ENCODE measurements at regions of chr14 and their contacts with region 1.

Region 1: DNA sequence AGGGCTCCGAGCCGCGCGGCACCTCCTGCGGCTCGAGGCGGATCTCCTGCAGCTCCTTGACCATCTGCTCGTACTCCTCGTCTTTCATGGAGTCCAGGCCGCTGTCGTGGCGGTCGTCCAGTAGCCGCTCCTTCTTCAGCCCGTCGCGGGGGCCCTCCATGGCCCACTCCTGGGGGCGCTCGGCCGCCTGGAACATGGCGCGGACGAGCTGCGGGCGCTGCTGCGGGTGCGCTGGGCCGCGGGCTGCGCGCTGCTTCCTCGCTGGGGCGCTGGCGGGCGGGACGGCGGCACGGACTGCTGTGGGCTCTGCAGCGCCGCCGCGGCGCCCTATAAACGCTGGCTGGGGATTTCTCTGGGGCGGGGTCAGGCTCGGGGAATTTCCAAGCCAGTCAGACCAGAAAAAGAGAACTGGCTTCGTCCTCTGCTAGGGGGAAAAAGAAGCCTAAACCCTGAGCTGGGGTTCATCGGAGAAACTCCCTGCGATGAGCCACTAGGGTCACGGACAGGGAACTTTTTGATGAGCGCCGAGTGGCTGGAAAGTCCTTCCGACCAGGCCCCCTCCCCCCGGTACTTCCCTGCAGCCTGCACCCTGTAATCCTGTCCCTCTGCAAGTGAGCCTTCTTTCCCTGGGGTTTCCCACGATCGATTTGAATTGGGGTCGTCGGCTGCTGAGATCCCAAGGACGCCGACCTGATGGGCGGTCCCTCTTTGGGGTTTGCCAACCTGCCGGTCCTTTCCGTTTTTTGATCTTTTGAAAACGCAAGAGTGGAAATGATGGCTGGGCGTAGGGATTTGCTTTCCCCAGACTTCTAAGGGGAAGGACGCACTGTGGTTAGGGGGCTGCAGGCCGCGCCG is at the start of gene NFKBIA:
- DNase-seq: peak; percentile 87 to 97 (median 93)
- ATAC-seq: peak; percentile 60
- H3K4me3 ChIP-seq: peak within 1 kb of the TSS; percentile 84 to 86
- H3K4me3 Mint-ChIP-seq: peak within 1 kb of the TSS; percentile 92
- H3K27ac ChIP-seq: peak within 1 kb of the TSS; percentile 93 to 95
- H3K27ac Mint-ChIP-seq: peak within 1 kb of the TSS; percentile 97
- H3K4me1 ChIP-seq: peaks cover 53% of the 10 kb centered on the region
- H3K4me1 Mint-ChIP-seq: peaks cover 52% of the 10 kb centered on the region
- H3K27me3 ChIP-seq: no peaks in the 10 kb centered on the region
- H3K27me3 Mint-ChIP-seq: no peaks in the 10 kb centered on the region
- CTCF ChIP-seq: no peak
- total RNA-seq, gene NFKBIA: 1,097 to 1,133 TPM

Region 2: GRCh38 chr14:34539407-34540180 is 865.1 kb before region 1 on chr14 and contains the start of gene EAPP:
- CTCF ChIA-PET with region 1: no interaction called
- POLR2A ChIA-PET with region 1: no interaction called
- intact Hi-C with region 1: loop called in 1 of 2 experiments (anchors 10 kb)
- DNase-seq: peak; percentile 88 to 97 (median 95)
- ATAC-seq: peak; percentile 98
- H3K4me3 ChIP-seq: peak within 1 kb of the TSS; percentile 94 to 95
- H3K4me3 Mint-ChIP-seq: peak within 1 kb of the TSS; percentile 97
- H3K27ac ChIP-seq: peak within 1 kb of the TSS; percentile 96 to 97
- H3K27ac Mint-ChIP-seq: peak within 1 kb of the TSS; percentile 98
- H3K4me1 ChIP-seq: peaks cover 16% of the 10 kb centered on the region
- H3K4me1 Mint-ChIP-seq: peaks cover 34% of the 10 kb centered on the region
- H3K27me3 ChIP-seq: no peaks in the 10 kb centered on the region
- H3K27me3 Mint-ChIP-seq: no peaks in the 10 kb centered on the region
- CTCF ChIP-seq: no peak
- total RNA-seq, gene EAPP: 91.0 to 91.4 TPM

Region 3: DNA sequence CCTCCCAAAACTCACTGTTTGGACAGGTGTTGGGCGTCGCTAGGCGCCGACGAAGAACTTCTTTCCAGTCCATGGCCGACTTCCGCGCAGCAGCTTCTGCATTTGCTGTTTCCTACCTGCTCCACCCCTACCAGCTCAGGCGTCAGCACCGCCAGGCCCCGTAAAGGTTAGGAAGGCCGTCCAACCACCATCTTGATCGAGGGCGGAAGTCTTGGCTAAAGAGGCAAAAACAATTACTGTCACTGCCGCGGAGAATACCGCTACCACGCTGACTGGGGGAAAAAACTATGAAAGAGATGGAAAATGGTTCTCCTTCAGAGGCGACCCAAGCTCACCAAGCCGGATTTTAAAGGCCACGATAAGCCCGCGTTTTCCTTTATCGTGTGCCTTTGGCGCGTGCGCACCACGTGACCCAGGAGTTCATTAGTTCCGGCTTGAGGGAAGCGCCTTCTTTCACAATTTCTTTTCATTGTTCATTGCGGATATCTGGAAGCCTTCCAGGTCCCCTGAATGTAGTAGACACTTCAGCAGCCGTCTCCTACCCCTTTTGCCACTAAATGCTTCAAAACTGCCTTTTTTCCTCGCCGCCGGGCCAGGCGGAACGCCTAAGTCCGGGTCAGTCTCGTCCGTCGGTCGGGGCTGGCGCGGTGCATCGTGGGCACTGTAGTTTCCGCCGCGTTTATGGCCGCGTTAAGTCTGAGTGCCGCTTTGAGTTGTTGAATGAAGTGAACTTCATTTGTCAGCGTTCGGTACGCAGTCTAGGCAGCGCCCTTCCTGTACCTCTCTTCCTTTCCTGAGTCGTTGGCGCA is 282.6 kb before region 1 on chr14 and contains the starts of genes PPP2R3C and PRORP:
- CTCF ChIA-PET with region 1: interaction called, 5 read pairs
- POLR2A ChIA-PET with region 1: interaction called, 30 read pairs
- intact Hi-C with region 1: loop called (anchors 1 kb)
- DNase-seq: peak; percentile 78 to 96 (median 88)
- ATAC-seq: peak; percentile 83
- H3K4me3 ChIP-seq: peak within 1 kb of the TSS; percentile 71 to 90
- H3K4me3 Mint-ChIP-seq: peak within 1 kb of the TSS; percentile 99
- H3K27ac ChIP-seq: peak within 1 kb of the TSS; percentile 96 to 97
- H3K27ac Mint-ChIP-seq: peak within 1 kb of the TSS; percentile 100
- H3K4me1 ChIP-seq: peaks cover 33% of the 10 kb centered on the region
- H3K4me1 Mint-ChIP-seq: peaks cover 66% of the 10 kb centered on the region
- H3K27me3 ChIP-seq: no peaks in the 10 kb centered on the region
- H3K27me3 Mint-ChIP-seq: no peaks in the 10 kb centered on the region
- CTCF ChIP-seq: no peak
- total RNA-seq, gene PPP2R3C: 44.2 to 51.4 TPM
- total RNA-seq, gene PRORP: 16.5 to 21.9 TPM

Region 4: DNA sequence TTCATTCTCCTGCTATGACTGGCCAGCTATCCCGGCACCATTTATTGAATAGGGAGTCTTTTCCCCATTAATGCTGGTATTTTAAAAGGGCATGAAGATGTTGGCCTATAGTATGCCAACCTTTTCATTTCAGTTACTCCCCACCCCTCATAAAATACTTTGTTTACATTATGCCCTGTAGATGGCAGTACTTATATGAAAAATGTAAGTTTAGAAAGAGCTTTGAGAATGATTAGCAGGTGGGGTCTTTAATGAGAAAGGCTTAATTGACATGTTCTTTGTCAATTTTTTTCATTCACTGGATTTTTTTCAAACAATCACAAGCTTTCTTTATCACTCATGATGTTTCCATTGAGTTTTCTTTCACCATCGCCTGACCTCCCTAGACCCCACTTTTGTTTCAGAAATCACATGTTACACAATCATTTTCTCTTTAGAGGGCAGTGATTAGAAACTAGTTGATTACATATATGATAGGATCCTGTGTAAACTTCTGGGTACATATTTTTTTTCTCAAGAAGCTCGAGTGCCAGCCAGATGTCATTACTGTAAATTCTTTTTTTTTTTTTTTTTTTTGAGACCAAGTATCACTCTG is 175.1 kb before region 1 on chr14:
- CTCF ChIA-PET with region 1: interaction called, 25 read pairs
- POLR2A ChIA-PET with region 1: interaction called, 12 read pairs
- intact Hi-C with region 1: loop called (anchors 1 to 2 kb)
- DNase-seq: peak in 2 of 9 experiments; percentile 32 to 59
- ATAC-seq: peak; percentile 58
- H3K4me3 ChIP-seq: no peak overlapping the region
- H3K4me3 Mint-ChIP-seq: no peak overlapping the region
- H3K27ac ChIP-seq: no peak overlapping the region
- H3K27ac Mint-ChIP-seq: no peak overlapping the region
- H3K4me1 ChIP-seq: peaks cover 7% of the 10 kb centered on the region
- H3K4me1 Mint-ChIP-seq: peaks cover 19% of the 10 kb centered on the region
- H3K27me3 ChIP-seq: no peaks in the 10 kb centered on the region
- H3K27me3 Mint-ChIP-seq: no peaks in the 10 kb centered on the region
- CTCF ChIP-seq: peak; percentile 45

Region 5: DNA sequence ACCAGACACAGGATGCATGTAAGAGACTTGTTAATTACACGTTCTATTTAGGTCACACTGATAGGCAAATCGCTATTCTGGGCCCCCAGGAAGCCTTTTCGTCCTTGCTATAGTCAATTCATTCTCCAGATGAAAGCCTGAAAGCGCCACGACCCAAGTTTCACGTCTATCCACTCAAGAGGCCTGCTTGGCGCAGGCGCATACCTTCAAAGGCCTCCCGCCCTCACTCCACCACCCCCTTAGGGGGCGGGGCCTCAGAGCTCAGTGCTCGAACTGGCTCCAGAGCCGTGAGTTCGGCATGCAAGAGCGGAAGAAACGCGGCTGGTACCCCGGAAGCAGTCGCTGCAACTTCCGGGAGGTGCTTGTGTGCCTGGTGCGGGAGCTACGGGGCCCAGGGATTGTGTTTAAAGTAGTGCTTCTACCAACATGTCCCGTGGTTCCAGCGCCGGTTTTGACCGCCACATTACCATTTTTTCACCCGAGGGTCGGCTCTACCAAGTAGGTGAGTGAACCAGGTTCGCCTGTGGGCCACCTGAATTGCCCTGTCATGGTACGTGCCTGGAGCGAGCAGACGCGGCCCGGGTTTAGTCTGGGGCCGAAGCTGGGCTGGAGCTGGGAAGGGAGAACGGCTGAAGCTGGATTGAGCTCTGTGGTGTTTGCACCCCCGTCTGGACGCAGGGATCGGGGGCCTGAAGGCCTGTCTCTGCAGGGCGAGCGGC is 112.5 kb before region 1 on chr14 and contains the start of gene PSMA6:
- CTCF ChIA-PET with region 1: interaction called, 11 read pairs
- POLR2A ChIA-PET with region 1: interaction called, 79 read pairs
- intact Hi-C with region 1: loop called (anchors 1 kb)
- DNase-seq: peak; percentile 98 to 100 (median 99)
- ATAC-seq: peak; percentile 97
- H3K4me3 ChIP-seq: peak within 1 kb of the TSS; percentile 79 to 85
- H3K4me3 Mint-ChIP-seq: peak within 1 kb of the TSS; percentile 98
- H3K27ac ChIP-seq: peak within 1 kb of the TSS; percentile 82 to 91
- H3K27ac Mint-ChIP-seq: peak within 1 kb of the TSS; percentile 98
- H3K4me1 ChIP-seq: peaks cover 31% of the 10 kb centered on the region
- H3K4me1 Mint-ChIP-seq: peaks cover 48% of the 10 kb centered on the region
- H3K27me3 ChIP-seq: no peaks in the 10 kb centered on the region
- H3K27me3 Mint-ChIP-seq: no peaks in the 10 kb centered on the region
- CTCF ChIP-seq: no peak
- total RNA-seq, gene PSMA6: 72.3 to 78.9 TPM

Region 6: DNA sequence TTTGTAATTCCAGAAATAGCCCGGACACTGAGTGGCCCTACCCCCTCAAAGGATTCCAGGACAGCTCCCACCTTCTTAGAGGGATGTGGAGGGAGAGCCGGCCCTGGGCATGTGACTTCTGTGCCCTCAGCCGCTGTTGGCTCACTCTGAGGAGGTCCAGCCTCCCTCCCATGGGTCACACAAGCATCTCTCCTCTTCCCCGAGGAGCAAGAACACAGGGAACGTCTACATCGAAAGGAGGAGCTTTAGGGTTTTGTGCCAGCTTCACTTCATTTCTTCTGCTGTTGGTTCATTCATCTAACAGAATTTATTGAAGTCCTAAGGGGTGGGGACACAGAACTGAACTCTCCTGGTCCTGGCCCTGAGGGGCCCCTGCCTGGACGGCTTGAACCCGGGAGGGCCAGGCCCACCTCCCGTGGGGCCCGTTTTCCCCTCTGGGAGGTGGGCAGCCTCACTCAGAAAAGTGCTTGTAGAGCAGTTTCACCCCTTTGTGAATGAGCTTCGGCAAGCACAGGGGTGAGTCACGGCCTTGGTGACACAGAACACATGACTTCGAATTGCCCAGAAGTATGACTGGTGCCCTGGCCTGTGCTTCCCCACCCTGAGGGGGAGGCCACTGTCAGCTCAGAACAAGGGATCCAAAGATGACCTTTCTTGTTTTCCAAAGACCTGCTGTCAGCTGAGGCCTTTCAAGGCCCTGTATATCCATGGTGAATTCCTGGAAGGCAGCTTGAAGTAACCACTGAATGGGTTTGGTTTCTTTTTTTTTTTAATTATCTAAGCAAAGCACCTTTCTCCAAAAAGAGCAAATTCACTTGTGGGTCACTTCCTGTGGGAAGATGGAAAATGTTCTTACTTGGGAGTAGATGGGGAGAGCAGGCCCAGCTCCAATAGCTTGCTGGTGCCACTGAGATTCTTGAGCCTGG is 39.3 kb before region 1 on chr14:
- CTCF ChIA-PET with region 1: interaction called, 13 read pairs
- POLR2A ChIA-PET with region 1: interaction called, 65 read pairs
- intact Hi-C with region 1: loop called in 1 of 2 experiments (anchors 2 kb)
- DNase-seq: peak in 7 of 9 experiments; percentile 32 to 56 (median 36)
- ATAC-seq: peak; percentile 39
- H3K4me3 ChIP-seq: no peak overlapping the region
- H3K4me3 Mint-ChIP-seq: peak overlapping the region; percentile 11
- H3K27ac ChIP-seq: no peak overlapping the region
- H3K27ac Mint-ChIP-seq: peak overlapping the region; percentile 45
- H3K4me1 ChIP-seq: peaks cover 54% of the 10 kb centered on the region
- H3K4me1 Mint-ChIP-seq: peaks cover 43% of the 10 kb centered on the region
- H3K27me3 ChIP-seq: no peaks in the 10 kb centered on the region
- H3K27me3 Mint-ChIP-seq: no peaks in the 10 kb centered on the region
- CTCF ChIP-seq: no peak

Region 7: GRCh38 chr14:35386673-35387125 is 18.0 kb before region 1 on chr14:
- CTCF ChIA-PET with region 1: no interaction called
- POLR2A ChIA-PET with region 1: no interaction called
- intact Hi-C with region 1: no loop called
- DNase-seq: no peak
- ATAC-seq: no peak
- H3K4me3 ChIP-seq: no peak overlapping the region
- H3K4me3 Mint-ChIP-seq: no peak overlapping the region
- H3K27ac ChIP-seq: no peak overlapping the region
- H3K27ac Mint-ChIP-seq: no peak overlapping the region
- H3K4me1 ChIP-seq: no peaks in the 10 kb centered on the region
- H3K4me1 Mint-ChIP-seq: no peaks in the 10 kb centered on the region
- H3K27me3 ChIP-seq: no peaks in the 10 kb centered on the region
- H3K27me3 Mint-ChIP-seq: no peaks in the 10 kb centered on the region
- CTCF ChIP-seq: no peak

Region 8: GRCh38 chr14:35430459-35431198 is 26.0 kb after region 1 on chr14:
- CTCF ChIA-PET with region 1: no interaction called
- POLR2A ChIA-PET with region 1: no interaction called
- intact Hi-C with region 1: no loop called
- DNase-seq: no peak
- ATAC-seq: no peak
- H3K4me3 ChIP-seq: no peak overlapping the region
- H3K4me3 Mint-ChIP-seq: no peak overlapping the region
- H3K27ac ChIP-seq: no peak overlapping the region
- H3K27ac Mint-ChIP-seq: no peak overlapping the region
- H3K4me1 ChIP-seq: no peaks in the 10 kb centered on the region
- H3K4me1 Mint-ChIP-seq: no peaks in the 10 kb centered on the region
- H3K27me3 ChIP-seq: no peaks in the 10 kb centered on the region
- H3K27me3 Mint-ChIP-seq: no peaks in the 10 kb centered on the region
- CTCF ChIP-seq: no peak

Region 9: DNA sequence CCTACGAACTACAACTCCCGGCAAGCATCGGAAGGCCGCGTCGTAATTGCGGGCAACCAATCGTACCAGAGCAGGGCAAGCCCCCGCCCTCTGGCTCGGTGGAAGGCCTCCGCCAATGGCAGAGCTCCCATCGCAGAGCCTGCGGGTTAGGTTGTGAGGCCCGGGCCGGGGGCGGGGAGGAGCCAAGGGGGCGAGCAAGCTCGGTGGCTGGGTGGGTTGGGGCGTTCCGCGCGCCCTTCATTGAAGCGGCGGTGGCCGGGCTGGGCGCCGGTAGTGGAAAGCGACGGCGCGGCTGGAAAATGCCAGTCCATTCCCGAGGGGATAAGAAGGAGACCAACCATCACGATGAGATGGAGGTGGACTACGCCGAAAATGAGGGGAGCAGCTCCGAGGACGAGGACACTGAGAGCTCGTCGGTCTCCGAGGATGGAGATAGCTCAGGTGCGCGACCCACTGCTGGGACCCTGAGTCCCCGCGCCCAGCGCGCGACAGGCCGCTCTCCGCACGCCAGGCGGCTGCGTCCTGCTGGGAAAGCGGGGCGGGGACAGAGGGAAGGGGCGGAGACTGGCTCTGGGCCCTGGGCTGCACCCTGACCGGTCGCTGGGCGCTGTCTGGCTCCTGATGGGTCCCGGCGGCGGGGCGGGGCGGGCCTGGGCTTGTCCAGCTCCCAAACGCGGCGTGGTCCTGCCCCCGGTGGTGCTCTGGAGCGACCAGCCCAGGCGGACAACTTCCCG is 421.7 kb after region 1 on chr14 and contains the start of gene BRMS1L:
- CTCF ChIA-PET with region 1: no interaction called
- POLR2A ChIA-PET with region 1: no interaction called
- intact Hi-C with region 1: loop called in 1 of 2 experiments (anchors 5 kb)
- DNase-seq: peak; percentile 91 to 98 (median 96)
- ATAC-seq: peak; percentile 98
- H3K4me3 ChIP-seq: peak within 1 kb of the TSS; percentile 92 to 97
- H3K4me3 Mint-ChIP-seq: peak within 1 kb of the TSS; percentile 95
- H3K27ac ChIP-seq: peak within 1 kb of the TSS; percentile 88 to 91
- H3K27ac Mint-ChIP-seq: peak within 1 kb of the TSS; percentile 89
- H3K4me1 ChIP-seq: no peaks in the 10 kb centered on the region
- H3K4me1 Mint-ChIP-seq: peaks cover 24% of the 10 kb centered on the region
- H3K27me3 ChIP-seq: no peaks in the 10 kb centered on the region
- H3K27me3 Mint-ChIP-seq: no peaks in the 10 kb centered on the region
- CTCF ChIP-seq: no peak
- total RNA-seq, gene BRMS1L: 15.5 to 17.9 TPM

Region 10: DNA sequence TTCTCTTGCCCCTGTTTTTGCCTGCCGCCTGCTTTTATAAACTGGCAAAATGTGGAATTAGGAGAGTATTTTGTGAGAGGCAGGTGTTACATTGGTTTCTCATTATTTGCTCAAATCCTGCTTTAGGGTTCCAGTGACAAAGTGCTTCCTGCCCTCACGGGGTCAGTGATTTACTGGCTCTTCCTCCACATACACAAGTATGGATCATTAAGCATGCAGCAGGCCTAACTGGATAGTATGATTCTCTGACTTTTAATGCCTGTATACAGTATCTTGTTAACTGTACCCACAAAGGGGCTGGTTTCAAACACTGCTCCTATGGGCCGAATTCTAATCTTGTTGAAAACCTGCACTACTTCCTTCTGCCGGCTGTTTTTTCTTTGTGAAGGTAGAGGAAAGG is 708.7 kb after region 1 on chr14:
- CTCF ChIA-PET with region 1: no interaction called
- POLR2A ChIA-PET with region 1: no interaction called
- intact Hi-C with region 1: no loop called
- DNase-seq: no peak
- ATAC-seq: no peak
- H3K4me3 ChIP-seq: no peak overlapping the region
- H3K4me3 Mint-ChIP-seq: no peak overlapping the region
- H3K27ac ChIP-seq: no peak overlapping the region
- H3K27ac Mint-ChIP-seq: no peak overlapping the region
- H3K4me1 ChIP-seq: no peaks in the 10 kb centered on the region
- H3K4me1 Mint-ChIP-seq: no peaks in the 10 kb centered on the region
- H3K27me3 ChIP-seq: no peaks in the 10 kb centered on the region
- H3K27me3 Mint-ChIP-seq: peaks cover 9% of the 10 kb centered on the region
- CTCF ChIP-seq: no peak